ENCODE measurements at regions of chr20 and their contacts with region 1.

Region 1: DNA sequence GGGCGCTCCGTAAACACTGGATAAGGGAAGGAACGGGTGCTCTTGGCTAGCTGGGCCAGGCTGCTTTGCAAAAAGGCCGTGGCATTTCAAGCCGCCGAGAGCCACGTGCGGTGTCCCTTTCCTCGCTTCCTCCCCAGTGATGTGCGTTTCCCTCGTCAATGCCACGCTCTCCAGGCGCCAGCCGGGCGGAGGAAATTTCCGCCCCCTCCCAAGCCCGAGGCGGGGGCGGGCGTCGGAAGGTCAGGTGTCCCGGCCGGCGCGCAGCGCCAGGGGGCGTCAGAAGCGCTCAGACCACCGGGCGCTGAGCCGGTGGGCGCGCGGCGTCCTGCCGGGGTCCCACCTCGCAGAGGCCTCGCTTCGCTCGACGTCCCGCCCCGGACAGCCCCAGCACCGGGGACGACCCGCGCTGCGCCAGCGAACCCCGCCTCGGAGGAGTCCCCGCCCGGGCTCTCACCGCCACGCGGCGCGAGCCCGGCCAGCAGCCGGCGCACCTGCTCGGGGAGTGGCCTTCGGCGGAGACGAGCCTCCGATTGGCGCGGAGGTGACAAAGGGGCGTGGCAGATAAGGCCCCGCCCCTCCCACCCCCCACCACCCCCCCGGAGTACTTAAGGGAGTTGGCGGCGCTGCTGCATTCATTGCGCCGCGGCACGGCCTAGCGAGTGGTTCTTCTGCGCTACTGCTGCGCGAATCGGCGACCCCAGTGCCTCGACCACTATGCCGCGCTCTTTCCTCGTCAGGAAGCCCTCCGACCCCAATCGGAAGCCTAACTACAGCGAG is at the start of gene SNAI1:
- DNase-seq: peak; percentile 84 to 86
- ATAC-seq: peak; percentile 96
- total RNA-seq, gene SNAI1: 0.25 to 0.46 TPM

Region 2: DNA sequence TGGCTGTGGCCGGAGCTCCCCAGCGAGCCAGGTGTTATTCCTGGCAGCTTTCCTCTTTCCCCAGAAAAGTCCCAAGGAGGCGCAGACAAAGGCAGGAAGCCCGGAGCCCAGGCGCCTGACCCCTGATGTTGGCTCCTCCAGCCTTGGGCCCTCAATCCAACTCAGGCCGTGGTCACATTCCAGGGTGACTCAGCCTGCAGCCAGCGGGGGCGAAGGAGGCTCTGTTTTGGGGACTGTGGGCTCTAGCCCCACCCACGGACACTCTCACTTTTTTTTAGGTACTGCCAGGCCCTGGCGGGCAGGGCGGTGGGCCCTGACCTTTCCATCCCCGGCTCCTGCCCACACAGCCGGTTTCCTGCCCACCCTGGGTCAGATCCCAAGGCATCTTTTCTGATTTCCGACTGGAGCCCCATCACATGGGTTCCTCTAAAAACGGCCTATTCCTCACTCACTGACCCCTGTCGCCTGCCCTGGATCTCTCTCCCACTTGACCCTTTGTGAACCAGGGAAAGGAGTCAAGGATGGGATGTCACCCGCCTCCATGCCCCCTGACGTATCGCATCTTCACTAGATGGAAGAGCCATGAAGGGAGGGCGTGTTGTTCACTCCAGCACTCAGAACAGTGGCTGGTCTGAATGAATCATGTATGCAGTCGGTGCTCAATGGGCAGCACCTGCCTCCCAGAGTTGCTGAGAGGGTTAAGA is 420.1 kb before region 1 on chr20:
- intact Hi-C with region 1: no loop called
- DNase-seq: peak in 1 of 2 donors; percentile 49
- ATAC-seq: no peak

Region 3: GRCh38 chr20:50070991-50071888 is 88.7 kb after region 1 on chr20:
- intact Hi-C with region 1: loop called (anchors 2 to 5 kb)
- DNase-seq: peak; percentile 69 to 94
- ATAC-seq: peak; percentile 98

Region 4: GRCh38 chr20:50085452-50086365 is 103.2 kb after region 1 on chr20:
- intact Hi-C with region 1: loop called in 1 of 2 experiments (anchors 5 kb)
- DNase-seq: no peak
- ATAC-seq: peak; percentile 76